GM10248 (cell line): ENCODE measurements at regions of chr7 and their contacts with region 1.

Region 1: DNA sequence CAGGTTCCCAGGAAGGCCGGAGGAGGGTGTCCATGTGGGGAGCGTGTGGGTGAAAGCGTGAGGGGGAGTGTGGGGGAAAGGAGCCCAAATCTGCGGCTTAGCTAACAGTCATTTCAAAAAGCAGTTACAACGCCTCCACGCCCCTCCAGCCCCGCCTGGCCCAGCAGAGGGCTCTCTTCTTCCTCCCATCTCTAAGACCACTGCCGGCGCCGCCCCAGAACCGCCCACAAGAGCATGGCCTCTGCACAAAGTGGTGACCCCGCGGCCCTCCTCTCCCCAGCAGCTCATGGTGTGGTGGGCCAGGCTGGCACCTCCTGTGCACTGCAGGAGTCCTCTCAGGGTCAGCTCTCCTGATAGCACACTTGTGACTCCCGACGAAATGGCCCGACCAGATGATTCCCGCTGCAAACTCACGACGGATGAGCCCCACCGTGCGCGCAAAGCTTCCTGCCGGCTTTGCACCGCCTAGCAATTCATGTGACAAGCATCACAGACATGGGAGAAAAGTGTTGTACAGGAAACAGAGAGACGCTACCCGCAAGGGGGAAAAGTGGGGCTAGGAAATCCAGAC is 12.4 kb upstream of the HUS1 start:
- DNase-seq: peak; percentile 92
- CTCF ChIP-seq: peak; percentile 80

Region 2: GRCh38 chr7:47979145-47979831 is 12.5 kb before region 1 on chr7 and contains the start of gene HUS1:
- CTCF ChIA-PET with region 1: interaction called, 16 read pairs
- POLR2A ChIA-PET with region 1: no interaction called
- DNase-seq: peak; percentile 93
- CTCF ChIP-seq: no peak

Region 3: DNA sequence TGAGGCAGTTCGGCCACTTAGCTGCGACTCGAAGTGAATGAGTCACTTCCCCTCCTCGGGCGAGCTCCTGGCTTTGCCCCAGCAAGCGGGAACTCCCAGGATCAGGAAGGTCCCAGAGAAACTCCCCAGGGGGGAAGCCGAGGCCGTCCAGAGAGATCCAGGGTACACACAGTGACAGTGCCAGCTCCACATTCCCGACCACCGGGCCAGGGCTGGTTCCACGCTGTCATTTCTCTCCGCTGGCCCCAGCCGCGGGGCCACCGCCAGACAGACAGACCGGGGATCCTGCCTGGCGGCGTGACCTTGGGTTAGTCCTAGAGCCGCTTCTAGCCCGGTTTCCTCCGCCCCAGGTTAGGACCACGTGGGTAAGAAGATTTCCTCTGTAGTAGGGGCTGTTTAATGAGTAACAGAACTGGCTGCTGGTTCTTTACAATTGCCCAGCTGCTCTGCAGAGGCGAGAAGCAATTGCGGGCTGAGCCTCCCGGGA is 96.8 kb after region 1 on chr7:
- CTCF ChIA-PET with region 1: interaction called, 13 read pairs
- POLR2A ChIA-PET with region 1: no interaction called
- DNase-seq: peak; percentile 45
- CTCF ChIP-seq: no peak

Region 4: DNA sequence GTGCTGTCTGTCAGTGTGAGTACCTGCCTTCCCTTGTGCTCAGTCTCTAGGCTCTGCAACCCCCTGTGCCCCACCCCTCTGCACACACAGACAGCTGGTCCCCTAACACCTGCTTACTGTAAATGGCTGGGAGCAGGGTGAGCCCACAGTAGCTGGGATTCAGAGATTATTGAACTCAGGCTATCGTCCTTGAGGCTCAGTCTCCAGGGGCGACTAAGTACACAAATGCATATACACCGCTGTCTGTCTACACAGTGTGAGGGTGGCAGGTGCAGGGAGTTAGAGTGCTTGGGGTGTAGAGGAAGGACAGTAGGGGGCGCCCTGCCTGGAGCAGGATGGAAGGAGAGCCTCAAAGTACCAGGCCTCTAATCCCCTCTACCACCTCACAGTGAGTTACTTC is 110.1 kb after region 1 on chr7:
- CTCF ChIA-PET with region 1: interaction called, 88 read pairs
- POLR2A ChIA-PET with region 1: no interaction called
- DNase-seq: no peak
- CTCF ChIP-seq: no peak